Activated CD4-positive, alpha-beta memory T cell treated with anti-CD3 and anti-CD28 coated beads, Interleukin-2, amount 10 ng/mL, durations not matched to agents 7 days and 5 days (primary cell): ENCODE measurements at regions of chr9 and their contacts with region 1.

Region 1: DNA sequence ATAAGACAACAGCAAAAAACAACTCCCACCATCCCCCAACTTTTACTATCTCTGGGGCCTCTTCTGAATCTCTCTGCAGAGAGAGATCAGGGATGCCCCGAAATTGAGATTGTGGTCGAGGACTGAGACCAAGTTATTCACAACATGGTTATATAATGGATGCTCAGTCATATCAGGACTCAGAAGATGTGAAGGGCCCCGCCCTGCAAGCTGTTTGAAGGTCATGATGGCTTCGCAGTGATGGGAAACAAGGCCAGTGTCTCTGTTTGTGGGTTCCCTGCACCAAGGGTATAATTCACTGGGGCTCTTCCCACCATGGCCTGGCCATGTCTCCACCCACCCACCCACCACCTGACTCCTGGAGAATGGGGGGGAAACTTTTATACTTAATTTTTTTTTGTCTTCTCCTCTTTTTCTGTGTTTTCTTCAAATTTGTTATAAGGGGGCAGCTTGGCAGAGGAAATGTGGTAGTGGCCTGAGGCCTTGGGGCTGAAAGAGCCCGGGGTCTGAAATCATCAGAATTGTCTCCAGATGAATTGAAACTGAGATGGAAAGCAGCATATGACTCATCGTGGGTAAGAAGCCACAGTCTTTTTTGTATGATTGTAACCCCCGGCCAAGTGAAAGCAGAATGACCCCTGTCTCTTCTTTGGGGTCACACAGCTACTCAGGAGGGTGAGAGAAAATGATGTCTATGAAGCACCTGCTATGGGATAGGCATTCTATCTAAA is 15.0 kb upstream of the TEX48 start:
- DNase-seq: peak; percentile 85
- H3K4me3 Mint-ChIP-seq: peak overlapping the region; percentile 39
- H3K27ac Mint-ChIP-seq: peak overlapping the region; percentile 97
- H3K4me1 Mint-ChIP-seq: peaks cover 79% of the 10 kb centered on the region
- H3K27me3 Mint-ChIP-seq: peaks cover 34% of the 10 kb centered on the region

Region 2: DNA sequence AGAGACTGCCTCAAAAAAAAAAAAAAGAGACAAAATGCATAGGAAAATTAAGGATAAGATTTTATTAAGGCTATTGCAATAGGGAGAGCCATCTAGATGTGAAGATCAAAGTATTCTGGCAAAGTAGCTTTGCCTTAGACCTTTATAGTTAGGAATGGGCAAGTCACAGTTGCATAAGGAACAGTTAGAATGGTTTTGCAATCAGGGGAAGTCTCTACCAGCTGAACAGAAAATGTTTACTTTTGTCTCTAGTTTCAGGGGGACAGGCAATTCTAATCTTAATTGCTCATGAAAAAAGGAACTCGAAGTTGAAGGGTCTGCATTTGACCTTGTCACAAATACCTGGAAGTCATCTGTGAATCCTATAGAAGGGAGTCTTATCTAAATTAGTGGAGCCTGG is 122.5 kb before region 1 on chr9:
- CTCF ChIA-PET with region 1: no interaction called
- POLR2A ChIA-PET with region 1: no interaction called
- DNase-seq: no peak
- H3K4me3 Mint-ChIP-seq: no peak overlapping the region
- H3K27ac Mint-ChIP-seq: no peak overlapping the region
- H3K4me1 Mint-ChIP-seq: no peaks in the 10 kb centered on the region
- H3K27me3 Mint-ChIP-seq: peaks cover 8% of the 10 kb centered on the region

Region 3: DNA sequence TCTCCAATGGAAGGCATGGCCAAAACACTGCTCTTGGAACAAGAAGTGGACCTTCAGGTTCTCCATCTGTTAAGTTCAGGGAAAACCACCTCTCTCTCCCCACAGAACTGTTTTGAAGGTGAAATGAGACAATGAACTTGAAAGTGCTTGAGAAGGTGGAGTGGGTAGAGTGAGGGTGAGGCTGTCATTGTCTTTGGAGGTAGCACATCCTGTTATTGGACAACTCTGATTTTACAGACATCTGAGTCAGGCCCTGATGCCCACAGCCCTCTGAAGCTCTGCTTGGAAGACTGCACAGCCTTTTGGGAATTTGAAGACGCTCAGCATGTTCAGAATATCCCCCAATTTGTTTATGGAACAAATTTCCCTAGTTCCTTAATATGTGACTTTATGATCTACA is 12.7 kb after region 1 on chr9:
- CTCF ChIA-PET with region 1: interaction called, 51 read pairs
- POLR2A ChIA-PET with region 1: interaction called, 418 read pairs
- DNase-seq: no peak
- H3K4me3 Mint-ChIP-seq: no peak overlapping the region
- H3K27ac Mint-ChIP-seq: peak overlapping the region; percentile 56
- H3K4me1 Mint-ChIP-seq: peaks cover 43% of the 10 kb centered on the region
- H3K27me3 Mint-ChIP-seq: peaks cover 27% of the 10 kb centered on the region

Region 4: DNA sequence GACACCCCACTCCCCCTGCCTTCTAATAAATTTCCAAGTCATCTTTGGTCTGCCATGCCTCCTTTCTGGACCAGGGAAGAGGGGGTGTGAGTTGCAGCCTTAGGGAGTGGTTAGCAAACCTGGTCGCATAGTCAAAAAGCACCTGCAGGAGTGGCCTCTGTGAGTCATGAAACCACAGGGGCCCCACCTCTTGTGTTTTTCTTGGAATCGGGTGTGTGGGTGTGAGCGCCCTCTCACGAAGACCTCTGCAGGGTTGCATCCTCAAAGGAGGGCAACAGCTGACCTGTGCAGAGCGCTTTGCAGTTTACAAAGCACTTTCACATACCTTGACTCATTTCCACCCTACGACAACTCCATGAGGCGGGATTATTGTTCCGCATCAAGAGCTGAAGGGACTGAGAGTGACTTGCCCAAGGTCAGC is 21.8 kb after region 1 on chr9:
- CTCF ChIA-PET with region 1: interaction called, 33 read pairs
- POLR2A ChIA-PET with region 1: interaction called, 418 read pairs
- DNase-seq: peak; percentile 98
- H3K4me3 Mint-ChIP-seq: peak overlapping the region; percentile 3
- H3K27ac Mint-ChIP-seq: peak overlapping the region; percentile 93
- H3K4me1 Mint-ChIP-seq: peaks cover 68% of the 10 kb centered on the region
- H3K27me3 Mint-ChIP-seq: peaks cover 20% of the 10 kb centered on the region